CD8-positive, alpha-beta memory T cell (primary cell): ENCODE measurements at regions of chr5 and their contacts with region 1.

Region 1: DNA sequence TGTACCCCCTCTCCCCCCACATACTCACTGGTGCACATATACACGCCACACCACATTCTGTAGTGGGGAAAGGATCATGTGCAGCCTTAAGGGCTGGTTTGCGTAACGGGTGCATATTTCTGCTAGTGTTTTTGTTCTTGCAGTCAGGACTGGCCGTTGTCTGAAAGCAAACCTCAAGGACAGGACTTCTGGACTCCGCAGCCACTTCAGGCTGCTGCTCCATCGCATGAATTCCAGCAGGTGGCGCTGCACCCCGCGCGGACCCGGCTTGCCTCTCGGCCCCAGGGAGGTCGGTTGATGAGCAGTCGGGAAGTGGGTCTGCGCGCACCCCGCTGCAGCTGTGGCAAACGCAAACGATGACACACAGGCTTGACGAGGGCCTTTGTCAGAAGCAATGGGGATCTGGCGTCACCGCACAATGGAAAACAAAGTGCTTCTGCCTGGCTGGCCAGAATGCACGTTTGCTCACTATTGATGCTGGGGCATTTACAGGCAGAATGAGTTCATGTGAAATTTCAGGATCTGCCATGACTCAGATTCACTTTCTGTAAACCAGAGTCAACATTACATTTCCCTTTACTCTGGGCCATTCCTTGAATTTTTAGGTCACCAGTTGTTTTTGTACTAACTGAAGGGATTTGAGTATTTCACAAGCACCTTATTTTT is 36.3 kb upstream of the GLRX start:
- DNase-seq: peak; percentile 77 to 90 (median 81)
- H3K4me3 ChIP-seq: no peak overlapping the region
- H3K4me3 Mint-ChIP-seq: peak overlapping the region in 6 of 7 donors; percentile 36 to 84 (median 60)
- H3K27ac ChIP-seq: no peak overlapping the region
- H3K27ac Mint-ChIP-seq: peak overlapping the region in 7 of 8 donors; percentile 16 to 78 (median 50)
- H3K4me1 ChIP-seq: no peaks in the 10 kb centered on the region
- H3K4me1 Mint-ChIP-seq: peaks cover 10 to 30% (median 25%) of the 10 kb centered on the region in 3 donors
- H3K27me3 ChIP-seq: no peaks in the 10 kb centered on the region
- H3K27me3 Mint-ChIP-seq: peaks cover 7 to 16% of the 10 kb centered on the region in 2 donors

Region 2: DNA sequence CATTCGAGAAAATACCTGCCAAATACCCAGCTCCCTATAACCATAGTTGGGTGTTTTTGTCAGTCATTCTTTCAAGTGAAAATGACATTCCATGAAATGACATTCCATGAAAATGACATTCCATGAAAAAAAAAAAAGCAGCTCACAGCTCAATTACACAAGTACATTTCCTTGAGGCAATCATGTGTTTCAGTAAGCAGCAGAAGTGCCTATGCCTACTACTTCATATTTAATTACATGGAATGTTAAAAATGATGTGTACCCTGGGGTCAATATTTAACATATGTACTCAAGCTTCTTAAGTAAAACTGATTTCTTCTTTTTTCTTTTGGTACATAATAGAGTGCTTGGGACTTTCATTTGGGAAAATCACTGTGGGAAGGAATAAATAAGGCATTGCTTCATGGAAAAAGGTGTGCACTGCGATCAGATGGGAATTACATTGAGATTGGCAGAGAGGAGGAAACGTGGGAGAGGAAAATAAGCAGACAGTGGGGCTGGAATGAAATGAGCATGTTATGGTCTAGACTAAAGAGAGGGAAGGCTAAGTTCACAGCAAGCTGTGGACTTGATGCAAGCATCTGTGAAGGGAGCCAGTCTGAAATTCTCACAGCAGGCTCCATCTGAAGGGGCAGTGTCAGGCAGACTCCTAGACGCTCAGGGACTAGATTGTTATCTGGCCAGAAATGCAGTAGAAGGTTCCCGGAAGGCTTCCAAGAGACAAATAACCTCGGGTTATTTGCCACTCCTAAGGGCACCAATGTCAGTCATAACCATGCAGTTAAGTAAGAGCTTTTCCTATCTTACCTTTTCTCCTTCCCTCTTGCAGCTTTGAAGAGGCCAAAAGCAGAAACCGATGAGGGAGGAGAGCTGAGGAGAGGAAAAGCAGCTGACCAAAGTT is 160.8 kb before region 1 on chr5:
- CTCF ChIA-PET with region 1: no interaction called
- POLR2A ChIA-PET with region 1: no interaction called
- DNase-seq: no peak
- H3K4me3 ChIP-seq: no peak overlapping the region
- H3K4me3 Mint-ChIP-seq: no peak overlapping the region
- H3K27ac ChIP-seq: peak overlapping the region; percentile 27
- H3K27ac Mint-ChIP-seq: no peak overlapping the region
- H3K4me1 ChIP-seq: no peaks in the 10 kb centered on the region
- H3K4me1 Mint-ChIP-seq: no peaks in the 10 kb centered on the region
- H3K27me3 ChIP-seq: no peaks in the 10 kb centered on the region
- H3K27me3 Mint-ChIP-seq: peaks cover 8 to 41% of the 10 kb centered on the region in 2 donors

Region 3: GRCh38 chr5:95826949-95827891 is 31.6 kb before region 1 on chr5:
- CTCF ChIA-PET with region 1: no interaction called
- POLR2A ChIA-PET with region 1: no interaction called
- DNase-seq: no peak
- H3K4me3 ChIP-seq: no peak overlapping the region
- H3K4me3 Mint-ChIP-seq: peak overlapping the region in 1 of 7 donors; percentile 73
- H3K27ac ChIP-seq: no peak overlapping the region
- H3K27ac Mint-ChIP-seq: peak overlapping the region in 5 of 8 donors; percentile 4 to 74 (median 62)
- H3K4me1 ChIP-seq: peaks cover 33% of the 10 kb centered on the region
- H3K4me1 Mint-ChIP-seq: peaks cover 39 to 49% (median 40%) of the 10 kb centered on the region in 3 donors
- H3K27me3 ChIP-seq: no peaks in the 10 kb centered on the region
- H3K27me3 Mint-ChIP-seq: no peaks in the 10 kb centered on the region

Region 4: DNA sequence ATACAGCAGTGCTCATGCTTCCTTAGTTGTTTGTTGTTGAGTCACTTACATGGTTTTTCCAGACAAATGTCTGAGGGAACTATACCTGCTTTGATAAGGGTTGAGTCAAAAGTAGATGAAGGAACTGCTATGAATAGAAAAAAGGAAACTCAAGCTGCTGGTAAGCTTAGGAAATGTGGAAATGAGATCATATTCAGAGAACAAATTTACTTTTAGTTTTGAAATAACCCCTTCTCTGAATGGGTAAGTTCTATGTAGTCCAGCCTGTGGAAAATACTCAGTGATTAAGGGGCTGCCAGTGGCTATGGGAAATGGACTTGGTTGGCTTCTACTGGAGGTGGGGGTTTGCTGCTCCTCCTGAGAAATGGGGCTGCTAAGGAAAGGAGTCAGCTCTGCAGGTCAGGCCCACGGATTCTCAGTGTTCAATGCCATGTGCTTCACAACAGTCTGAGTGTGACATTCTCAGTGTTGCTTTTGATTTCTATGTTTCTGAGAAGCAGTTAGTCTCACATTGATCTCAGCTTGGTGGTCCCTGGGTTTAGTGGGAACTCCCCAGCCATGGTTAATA is 11.4 kb after region 1 on chr5:
- CTCF ChIA-PET with region 1: interaction called, 16 read pairs
- POLR2A ChIA-PET with region 1: no interaction called
- DNase-seq: no peak
- H3K4me3 ChIP-seq: no peak overlapping the region
- H3K4me3 Mint-ChIP-seq: peak overlapping the region in 6 of 7 donors; percentile 29 to 86 (median 44)
- H3K27ac ChIP-seq: no peak overlapping the region
- H3K27ac Mint-ChIP-seq: peak overlapping the region in 5 of 8 donors; percentile 46 to 81 (median 63)
- H3K4me1 ChIP-seq: peaks cover 35% of the 10 kb centered on the region
- H3K4me1 Mint-ChIP-seq: peaks cover 26 to 34% (median 34%) of the 10 kb centered on the region in 3 donors
- H3K27me3 ChIP-seq: no peaks in the 10 kb centered on the region
- H3K27me3 Mint-ChIP-seq: peaks cover 0 to 5% of the 10 kb centered on the region in 2 donors

Region 5: DNA sequence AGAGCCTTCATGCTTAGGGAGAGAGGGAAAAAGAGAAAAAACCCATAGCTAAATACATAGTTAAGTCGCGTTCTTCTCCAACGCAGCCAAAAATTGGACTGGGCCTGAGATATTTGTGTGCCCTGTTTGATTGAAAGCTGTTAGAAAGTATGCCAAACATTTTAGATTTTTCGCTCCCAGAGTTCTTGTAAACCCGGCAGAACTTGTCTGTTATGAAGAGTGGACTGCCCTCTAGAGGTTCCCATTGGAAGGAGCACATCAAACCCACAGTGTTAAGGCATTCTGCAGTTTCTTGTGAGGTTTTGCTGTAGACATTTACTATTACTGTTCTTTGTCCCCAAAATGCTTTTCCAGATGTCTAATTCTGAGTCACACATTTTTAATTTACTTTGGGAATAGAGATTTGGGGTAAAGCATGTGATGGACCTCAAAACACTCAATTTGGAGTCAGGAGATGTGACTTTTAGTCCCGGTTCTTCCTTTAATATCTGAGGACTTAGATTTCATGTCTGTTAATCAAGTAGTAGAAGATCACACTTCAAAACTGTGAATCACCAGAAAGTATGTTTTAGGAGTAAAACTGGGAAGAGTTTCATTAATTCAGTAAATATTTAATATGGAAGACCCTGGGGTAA is 477.7 kb after region 1 on chr5:
- CTCF ChIA-PET with region 1: interaction called, 76 read pairs
- POLR2A ChIA-PET with region 1: interaction called, 3 read pairs
- DNase-seq: peak; percentile 20 to 57 (median 51)
- H3K4me3 ChIP-seq: no peak overlapping the region
- H3K4me3 Mint-ChIP-seq: no peak overlapping the region
- H3K27ac ChIP-seq: no peak overlapping the region
- H3K27ac Mint-ChIP-seq: no peak overlapping the region
- H3K4me1 ChIP-seq: no peaks in the 10 kb centered on the region
- H3K4me1 Mint-ChIP-seq: no peaks in the 10 kb centered on the region
- H3K27me3 ChIP-seq: no peaks in the 10 kb centered on the region
- H3K27me3 Mint-ChIP-seq: peaks cover 5 to 27% of the 10 kb centered on the region in 2 donors

Region 6: GRCh38 chr5:96601811-96602244 is 743.0 kb after region 1 on chr5:
- CTCF ChIA-PET with region 1: interaction called, 11 read pairs
- POLR2A ChIA-PET with region 1: no interaction called
- DNase-seq: peak; percentile 24 to 62 (median 52)
- H3K4me3 ChIP-seq: no peak overlapping the region
- H3K4me3 Mint-ChIP-seq: no peak overlapping the region
- H3K27ac ChIP-seq: no peak overlapping the region
- H3K27ac Mint-ChIP-seq: no peak overlapping the region
- H3K4me1 ChIP-seq: no peaks in the 10 kb centered on the region
- H3K4me1 Mint-ChIP-seq: peaks cover 2 to 3% (median 2%) of the 10 kb centered on the region in 3 donors
- H3K27me3 ChIP-seq: no peaks in the 10 kb centered on the region
- H3K27me3 Mint-ChIP-seq: peaks cover 5 to 13% of the 10 kb centered on the region in 2 donors